ENCODE measurements at regions of chr10 and their contacts with region 1.

Region 1: DNA sequence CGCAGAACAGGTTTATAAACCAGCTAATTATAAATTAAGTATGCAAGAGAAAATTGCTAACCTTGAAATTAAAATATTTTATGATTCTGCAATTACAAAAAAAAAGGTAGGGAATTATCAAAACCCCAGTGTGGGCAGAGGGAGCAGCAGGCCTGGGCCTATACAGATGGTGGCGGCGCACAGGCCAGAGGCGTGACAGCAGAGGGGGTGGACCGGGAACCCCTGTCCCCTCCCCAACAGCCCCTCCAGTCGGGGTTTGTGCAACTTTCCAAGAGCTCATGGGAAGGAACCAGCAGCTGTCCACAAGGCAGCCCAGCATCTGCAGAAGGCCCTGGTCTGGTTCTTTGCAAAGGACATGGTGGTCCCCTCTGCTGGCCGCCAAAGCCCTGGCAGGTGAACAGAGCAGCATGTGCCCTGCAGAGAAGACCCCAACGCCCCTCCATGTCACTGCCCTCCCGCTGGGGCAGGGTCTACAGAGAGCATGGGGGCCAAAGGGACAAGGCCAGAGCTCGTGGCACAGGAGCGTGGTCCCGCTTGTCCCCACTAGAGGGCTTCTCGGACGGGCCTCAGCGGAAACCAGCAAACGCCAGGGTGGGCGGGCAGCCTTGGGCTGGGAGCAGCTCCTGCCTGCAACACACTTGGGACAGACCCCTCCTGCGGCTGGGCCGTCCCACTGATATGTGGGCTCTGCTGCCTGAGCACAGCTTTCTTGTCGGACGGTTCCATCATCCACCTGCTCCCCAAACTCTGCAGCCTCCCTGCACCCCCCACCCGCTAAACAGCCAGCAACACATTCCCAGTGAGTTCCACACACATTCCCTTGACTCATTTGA is 75.1 kb downstream of the EBF3 start:
- DNase-seq: no peak
- ATAC-seq: peak; percentile 94
- H3K4me3 ChIP-seq: no peak overlapping the region
- H3K27ac ChIP-seq: no peak overlapping the region
- H3K4me1 ChIP-seq: no peaks in the 10 kb centered on the region
- H3K27me3 ChIP-seq: peaks cover 2% of the 10 kb centered on the region; the same call in 1 of the 2 replicates
- CTCF ChIP-seq: peak; percentile 93

Region 2: GRCh38 chr10:129135624-129136023 is 753.4 kb before region 1 on chr10:
- CTCF ChIA-PET with region 1: interaction called, 13 read pairs
- POLR2A ChIA-PET with region 1: no interaction called
- in situ Hi-C with region 1: no loop called
- intact Hi-C with region 1: no loop called
- DNase-seq: no peak
- ATAC-seq: no peak
- H3K4me3 ChIP-seq: no peak overlapping the region
- H3K27ac ChIP-seq: no peak overlapping the region
- H3K4me1 ChIP-seq: no peaks in the 10 kb centered on the region
- H3K27me3 ChIP-seq: peaks cover 14% of the 10 kb centered on the region
- CTCF ChIP-seq: no peak

Region 3: DNA sequence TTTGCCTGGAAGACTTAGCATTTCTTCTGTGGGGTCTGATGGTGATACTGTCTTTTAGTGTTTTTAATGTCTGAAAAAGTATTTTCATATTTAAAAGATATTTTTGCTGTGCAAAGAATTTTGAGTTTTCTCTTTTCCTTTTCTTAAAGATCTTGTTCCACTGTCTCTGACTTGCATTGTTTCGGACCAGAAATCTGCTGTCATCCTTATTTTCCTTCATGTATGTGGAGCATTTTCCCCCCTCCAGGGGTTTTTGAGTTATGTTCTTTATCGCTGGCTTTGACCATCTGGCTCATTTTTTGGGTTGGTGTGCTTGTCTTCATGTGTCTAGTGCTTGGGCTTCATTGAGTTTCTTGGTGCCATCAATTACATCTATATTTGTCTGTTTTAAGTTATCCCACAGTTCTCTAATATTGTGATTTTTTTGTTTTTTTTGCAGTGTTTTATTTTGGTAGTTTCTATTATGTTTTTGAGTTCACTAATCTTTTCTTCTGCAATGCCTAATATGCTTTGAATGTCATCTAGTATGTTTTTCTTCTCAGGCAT is 302.0 kb before region 1 on chr10:
- CTCF ChIA-PET with region 1: no interaction called
- POLR2A ChIA-PET with region 1: no interaction called
- in situ Hi-C with region 1: no loop called
- intact Hi-C with region 1: no loop called
- DNase-seq: no peak
- ATAC-seq: no peak
- H3K4me3 ChIP-seq: no peak overlapping the region
- H3K27ac ChIP-seq: no peak overlapping the region
- H3K4me1 ChIP-seq: no peaks in the 10 kb centered on the region
- H3K27me3 ChIP-seq: no peaks in the 10 kb centered on the region
- CTCF ChIP-seq: no peak

Region 4: GRCh38 chr10:129662426-129662825 is 226.6 kb before region 1 on chr10:
- CTCF ChIA-PET with region 1: no interaction called
- POLR2A ChIA-PET with region 1: no interaction called
- in situ Hi-C with region 1: no loop called
- intact Hi-C with region 1: no loop called
- DNase-seq: no peak
- ATAC-seq: no peak
- H3K4me3 ChIP-seq: no peak overlapping the region
- H3K27ac ChIP-seq: no peak overlapping the region
- H3K4me1 ChIP-seq: no peaks in the 10 kb centered on the region
- H3K27me3 ChIP-seq: no peaks in the 10 kb centered on the region
- CTCF ChIP-seq: no peak

Region 5: GRCh38 chr10:129833994-129834739 is 54.8 kb before region 1 on chr10:
- CTCF ChIA-PET with region 1: no interaction called
- POLR2A ChIA-PET with region 1: no interaction called
- in situ Hi-C with region 1: no loop called
- intact Hi-C with region 1: no loop called
- DNase-seq: no peak
- ATAC-seq: no peak
- H3K4me3 ChIP-seq: no peak overlapping the region
- H3K27ac ChIP-seq: no peak overlapping the region
- H3K4me1 ChIP-seq: no peaks in the 10 kb centered on the region
- H3K27me3 ChIP-seq: 0 out of 2 replicates have a peak, but pooled peaks cover 5% of the 10 kb centered on the region
- CTCF ChIP-seq: no peak

Region 6: GRCh38 chr10:129845111-129845753 is 43.8 kb before region 1 on chr10:
- CTCF ChIA-PET with region 1: no interaction called
- POLR2A ChIA-PET with region 1: no interaction called
- in situ Hi-C with region 1: no loop called
- intact Hi-C with region 1: no loop called
- DNase-seq: no peak
- ATAC-seq: no peak
- H3K4me3 ChIP-seq: no peak overlapping the region
- H3K27ac ChIP-seq: no peak overlapping the region
- H3K4me1 ChIP-seq: peaks cover 4% of the 10 kb centered on the region; the same call in 1 of the 2 replicates
- H3K27me3 ChIP-seq: no peaks in the 10 kb centered on the region; the same call in none of the 2 replicates
- CTCF ChIP-seq: no peak

Region 7: DNA sequence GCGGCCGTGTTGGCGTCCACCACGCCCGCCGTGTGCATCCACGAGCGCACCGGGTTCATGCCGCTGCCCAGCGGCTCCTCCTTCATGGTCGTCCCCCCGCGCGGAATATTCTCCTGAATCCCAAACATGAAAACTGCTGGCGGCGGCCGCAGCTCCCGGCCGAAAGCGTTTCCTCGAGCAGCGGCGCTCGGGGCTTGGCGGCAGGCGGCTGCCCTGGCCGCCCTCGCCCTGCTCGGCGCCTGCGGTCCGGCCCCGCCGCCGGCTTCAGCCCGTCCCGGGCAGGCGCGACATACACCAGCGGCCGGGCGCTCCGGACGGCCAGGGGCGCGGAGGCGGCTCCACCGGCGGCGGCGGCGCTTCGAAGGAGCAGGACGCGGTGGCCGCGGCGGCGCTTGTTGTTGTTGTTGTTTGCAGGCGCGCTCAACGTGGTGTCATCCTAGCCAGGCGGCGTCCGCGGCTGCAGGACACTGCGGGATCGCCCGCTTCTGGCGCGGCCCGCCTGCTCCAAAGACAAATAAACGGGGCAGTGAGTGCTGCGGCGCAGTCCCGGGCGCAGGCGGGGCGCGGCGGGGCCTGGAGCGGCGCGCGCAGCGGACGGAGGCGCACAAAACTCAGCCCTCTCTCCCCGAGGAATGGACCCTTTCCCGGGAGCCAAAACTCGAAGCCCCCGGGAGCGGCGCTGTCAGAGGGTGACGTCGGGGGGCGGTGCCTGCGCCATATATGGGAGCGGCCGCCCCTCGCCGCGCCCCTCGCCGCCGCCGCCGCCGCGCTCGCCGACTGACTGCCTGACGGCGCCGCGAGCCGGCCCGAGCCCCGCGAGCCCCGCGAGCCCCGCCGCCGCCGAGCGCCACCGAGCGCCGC is 74.9 kb after region 1 on chr10 and contains the start of gene EBF3:
- CTCF ChIA-PET with region 1: interaction called, 12 read pairs
- POLR2A ChIA-PET with region 1: no interaction called
- in situ Hi-C with region 1: no loop called
- intact Hi-C with region 1: loop called (anchors 5 kb)
- DNase-seq: no peak
- ATAC-seq: peak; percentile 89
- H3K4me3 ChIP-seq: peak within 1 kb of the TSS; percentile 54 to 59
- H3K27ac ChIP-seq: no peak within 1 kb of the TSS
- H3K4me1 ChIP-seq: peaks cover 9% of the 10 kb centered on the region
- H3K27me3 ChIP-seq: peaks cover 23% of the 10 kb centered on the region
- CTCF ChIP-seq: no peak
- total RNA-seq, gene EBF3: 0.64 TPM

Region 8: DNA sequence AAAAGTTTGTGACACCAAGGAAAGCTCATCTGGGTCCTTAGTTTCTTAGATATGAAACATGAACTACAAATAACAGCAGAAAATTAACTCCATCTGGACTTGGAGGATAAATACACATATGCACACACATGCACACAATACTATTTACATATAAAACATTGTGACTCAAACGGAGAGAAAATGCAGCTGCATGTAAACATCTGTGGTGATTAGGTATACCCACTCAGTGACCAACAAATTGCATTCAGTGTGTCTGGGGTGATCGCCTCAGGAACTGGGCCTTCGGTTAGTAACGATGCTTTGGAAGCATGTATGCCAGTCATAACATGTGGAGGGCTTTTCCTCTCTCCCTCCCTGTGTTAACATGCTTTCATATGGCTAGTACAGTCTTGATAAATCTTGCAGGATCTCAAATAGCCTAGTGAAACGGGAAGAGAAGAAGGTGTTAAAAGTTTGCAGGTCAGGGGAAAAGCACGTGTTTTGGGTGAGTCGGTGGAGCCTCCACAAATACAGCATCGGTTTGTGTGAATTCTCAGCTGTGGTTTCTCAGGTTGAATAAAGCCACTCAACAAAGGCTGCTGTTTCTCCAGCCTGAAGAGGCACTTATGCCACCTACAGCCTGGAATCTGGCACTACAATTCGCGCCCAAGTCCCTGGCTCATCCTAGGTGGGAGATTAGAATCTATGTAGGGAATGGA is 238.5 kb after region 1 on chr10:
- CTCF ChIA-PET with region 1: no interaction called
- POLR2A ChIA-PET with region 1: no interaction called
- in situ Hi-C with region 1: no loop called
- intact Hi-C with region 1: loop called (anchors 10 kb)
- DNase-seq: peak; percentile 65
- ATAC-seq: peak; percentile 98
- H3K4me3 ChIP-seq: no peak overlapping the region
- H3K27ac ChIP-seq: no peak overlapping the region
- H3K4me1 ChIP-seq: peaks cover 13% of the 10 kb centered on the region
- H3K27me3 ChIP-seq: no peaks in the 10 kb centered on the region; the same call in 1 of the 2 replicates
- CTCF ChIP-seq: peak; percentile 96

Region 9: GRCh38 chr10:130251766-130252165 is 362.8 kb after region 1 on chr10:
- CTCF ChIA-PET with region 1: interaction called, 11 read pairs
- POLR2A ChIA-PET with region 1: no interaction called
- in situ Hi-C with region 1: no loop called
- intact Hi-C with region 1: no loop called
- DNase-seq: no peak
- ATAC-seq: no peak
- H3K4me3 ChIP-seq: no peak overlapping the region
- H3K27ac ChIP-seq: no peak overlapping the region
- H3K4me1 ChIP-seq: no peaks in the 10 kb centered on the region
- H3K27me3 ChIP-seq: no peaks in the 10 kb centered on the region
- CTCF ChIP-seq: no peak